Calu3 (cell line): ENCODE measurements at regions of chrX and their contacts with region 1.

Region 1: DNA sequence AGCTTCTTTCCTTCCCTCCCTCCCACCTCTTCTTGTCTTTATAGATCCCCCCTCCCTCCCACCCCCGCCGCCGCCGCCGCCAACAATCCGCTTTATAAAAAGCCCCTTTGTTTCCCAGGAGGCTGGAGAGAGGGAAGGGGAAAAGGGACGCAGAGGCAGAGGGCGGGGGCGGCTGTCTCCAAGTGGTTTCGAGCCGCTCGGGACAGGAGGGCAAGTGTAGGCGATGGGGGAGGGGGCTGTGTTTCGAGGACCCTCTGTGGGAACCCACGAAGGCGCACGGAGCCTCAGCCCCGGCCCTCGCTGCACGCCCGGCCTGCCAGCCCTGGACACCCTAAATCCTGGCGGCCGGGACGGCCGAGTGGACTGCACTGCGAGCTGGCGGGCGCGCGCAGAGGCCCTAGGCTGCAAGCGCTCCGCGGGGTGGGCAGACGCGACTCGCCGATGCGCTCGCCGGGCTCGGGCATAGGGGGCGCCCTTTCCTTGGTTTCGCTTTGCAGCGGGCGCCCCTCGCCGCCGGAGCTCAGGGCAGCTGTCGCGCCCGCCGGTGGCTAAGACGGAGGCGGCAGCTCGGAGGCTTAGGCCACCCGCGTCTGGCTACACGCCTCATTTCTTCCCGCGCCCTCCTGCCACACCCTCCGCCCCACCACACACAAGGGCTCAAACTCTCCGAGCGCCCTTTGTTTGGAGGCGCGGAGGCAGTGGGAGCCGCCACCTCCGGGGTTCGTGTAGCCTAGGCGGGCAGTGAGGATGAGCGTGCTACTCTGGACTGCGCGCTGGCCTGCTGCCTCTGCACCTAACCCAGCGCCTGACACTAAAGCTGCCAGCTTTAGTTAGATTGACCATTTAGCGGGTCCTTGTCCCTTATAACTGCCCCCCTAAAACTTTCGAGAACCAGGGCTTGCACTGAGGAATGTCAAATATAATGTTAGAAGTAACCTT is 2.2 kb downstream of the MAMLD1 start:
- DNase-seq: peak; percentile 84
- H3K4me3 Mint-ChIP-seq: peak overlapping the region; percentile 84
- H3K27ac Mint-ChIP-seq: peak overlapping the region; percentile 90
- H3K4me1 Mint-ChIP-seq: peaks cover 38% of the 10 kb centered on the region
- H3K27me3 Mint-ChIP-seq: peaks cover 21% of the 10 kb centered on the region
- CTCF ChIP-seq: peak; percentile 57

Region 2: GRCh38 chrX:150155436-150156035 is 209.8 kb before region 1 on chrX:
- CTCF ChIA-PET with region 1: no interaction called
- intact Hi-C with region 1: loop called (anchors 10 kb)
- DNase-seq: peak; percentile 38
- H3K4me3 Mint-ChIP-seq: no peak overlapping the region
- H3K27ac Mint-ChIP-seq: no peak overlapping the region
- H3K4me1 Mint-ChIP-seq: no peaks in the 10 kb centered on the region
- H3K27me3 Mint-ChIP-seq: no peaks in the 10 kb centered on the region
- CTCF ChIP-seq: no peak

Region 3: DNA sequence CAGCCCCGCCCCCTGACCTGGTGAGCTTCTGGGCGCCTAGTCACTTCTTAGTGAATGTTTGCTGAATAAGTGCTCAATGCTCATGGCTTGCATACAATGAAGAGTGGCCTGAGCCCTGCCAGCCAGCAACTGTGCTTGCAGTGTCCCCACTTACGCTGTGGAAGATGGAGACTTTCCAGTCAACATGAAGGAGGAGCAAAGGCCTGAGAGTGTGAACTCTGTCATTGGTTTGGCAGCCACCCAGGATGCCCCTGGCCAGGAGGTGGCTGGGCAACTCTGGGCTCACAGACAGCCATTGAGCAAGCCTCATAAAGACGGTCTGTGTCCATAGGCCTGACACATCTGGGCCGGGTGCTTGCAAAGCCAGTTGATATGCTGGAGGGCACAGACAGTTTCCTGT is 74.3 kb before region 1 on chrX:
- CTCF ChIA-PET with region 1: no interaction called
- intact Hi-C with region 1: loop called (anchors 5 kb)
- DNase-seq: peak; percentile 13
- H3K4me3 Mint-ChIP-seq: no peak overlapping the region
- H3K27ac Mint-ChIP-seq: no peak overlapping the region
- H3K4me1 Mint-ChIP-seq: no peaks in the 10 kb centered on the region
- H3K27me3 Mint-ChIP-seq: no peaks in the 10 kb centered on the region
- CTCF ChIP-seq: no peak

Region 4: GRCh38 chrX:150575416-150575808 is 210.1 kb after region 1 on chrX:
- CTCF ChIA-PET with region 1: no interaction called
- intact Hi-C with region 1: loop called (anchors 5 kb)
- DNase-seq: peak; percentile 68
- H3K4me3 Mint-ChIP-seq: peak overlapping the region; percentile 34
- H3K27ac Mint-ChIP-seq: peak overlapping the region; percentile 82
- H3K4me1 Mint-ChIP-seq: peaks cover 44% of the 10 kb centered on the region
- H3K27me3 Mint-ChIP-seq: no peaks in the 10 kb centered on the region
- CTCF ChIP-seq: no peak

Region 5: GRCh38 chrX:150683536-150684146 is 318.3 kb after region 1 on chrX:
- CTCF ChIA-PET with region 1: no interaction called
- intact Hi-C with region 1: loop called (anchors 10 kb)
- DNase-seq: peak; percentile 32
- H3K4me3 Mint-ChIP-seq: no peak overlapping the region
- H3K27ac Mint-ChIP-seq: no peak overlapping the region
- H3K4me1 Mint-ChIP-seq: peaks cover 8% of the 10 kb centered on the region
- H3K27me3 Mint-ChIP-seq: no peaks in the 10 kb centered on the region
- CTCF ChIP-seq: no peak